Cardiac septum (tissue), 1 donor: ENCODE measurements at regions of chr5 and their contacts with region 1.

Region 1: DNA sequence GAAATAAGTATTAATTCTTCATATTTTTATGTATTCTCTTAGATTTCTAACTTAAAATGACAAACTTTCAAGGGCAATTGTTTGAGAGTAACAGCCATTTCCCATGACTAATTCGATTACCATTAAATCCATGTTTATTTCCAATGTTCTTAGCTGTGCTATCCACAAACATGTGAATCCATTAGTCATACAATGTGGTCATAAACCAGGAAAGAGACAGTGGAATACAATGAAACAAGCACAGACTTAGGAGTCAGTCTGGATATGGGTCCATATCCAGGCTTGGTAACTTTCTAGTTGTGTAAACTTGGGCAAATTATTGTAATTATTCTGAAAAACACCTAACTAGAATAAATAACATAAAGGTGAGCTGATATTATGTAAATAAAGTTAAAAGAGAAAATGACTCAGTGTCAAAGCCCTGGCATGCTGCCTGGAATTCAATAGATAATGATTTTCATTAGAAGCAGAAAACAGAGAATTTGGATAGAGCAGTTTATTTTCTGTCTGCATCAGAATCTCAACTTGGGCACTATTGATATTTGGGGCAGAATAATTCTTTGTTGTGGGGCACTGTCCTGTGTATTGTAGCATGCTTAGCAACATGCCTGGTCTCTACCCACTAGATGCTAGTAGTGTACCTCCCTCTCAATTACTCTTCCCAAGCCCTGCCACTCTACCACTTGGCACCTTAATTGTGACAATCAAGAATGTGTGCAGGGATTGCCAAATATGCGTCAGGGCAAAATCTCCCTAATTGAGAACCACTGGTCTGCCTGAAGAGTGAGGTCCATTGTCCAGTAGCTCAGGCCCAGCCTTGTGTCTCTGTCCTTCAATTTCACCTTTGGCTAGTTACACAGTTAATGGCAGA is 44.7 kb upstream of the SLC27A6 start:
- DNase-seq: no peak

Region 2: GRCh38 chr5:128808656-128809055 is 111.9 kb before region 1 on chr5:
- intact Hi-C with region 1: no loop called
- DNase-seq: no peak

Region 3: DNA sequence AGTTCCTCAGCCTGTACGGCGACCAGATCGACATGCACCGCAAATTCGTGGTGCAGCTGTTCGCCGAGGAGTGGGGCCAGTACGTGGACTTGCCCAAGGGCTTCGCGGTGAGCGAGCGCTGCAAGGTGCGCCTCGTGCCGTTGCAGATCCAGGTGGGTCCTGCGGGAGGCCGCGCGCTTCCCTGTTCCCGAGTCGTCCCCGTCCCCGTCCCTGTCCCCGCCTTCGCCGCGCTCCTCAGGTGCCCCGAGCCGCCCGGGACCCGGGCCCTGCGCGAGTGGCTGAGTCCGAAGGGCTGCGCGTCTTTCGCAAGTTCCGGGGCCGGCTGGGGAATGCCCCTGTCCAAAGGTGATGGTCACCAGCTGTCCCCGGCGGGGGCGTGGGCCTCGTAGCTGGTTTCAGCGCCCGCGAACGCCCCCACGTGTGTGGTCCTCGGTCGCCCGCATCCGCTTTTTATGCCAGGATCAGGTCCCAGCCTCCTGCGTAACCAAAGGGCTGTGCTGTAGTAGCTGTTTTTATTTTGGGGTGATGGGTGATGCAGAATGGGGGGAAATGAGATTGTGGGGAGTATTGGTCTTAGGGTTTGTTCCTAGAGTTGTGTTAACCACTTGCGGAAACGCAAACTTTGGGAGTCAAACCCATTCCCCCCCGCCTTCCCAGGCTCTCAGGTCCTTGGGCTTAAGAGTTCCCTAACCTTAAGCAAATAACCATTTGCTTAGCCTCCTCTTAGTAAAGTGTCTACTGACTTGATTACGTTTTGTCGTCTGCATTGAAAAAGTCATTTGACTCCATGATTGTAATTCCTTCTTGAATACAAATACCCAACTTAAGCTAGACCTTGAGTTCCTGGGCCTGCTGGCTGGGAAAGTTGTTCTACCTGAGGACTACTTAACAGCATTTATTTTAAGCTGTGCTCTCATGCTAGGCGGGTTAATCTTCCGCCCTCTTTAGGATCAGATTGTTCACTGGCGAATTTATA is 174.6 kb after region 1 on chr5:
- intact Hi-C with region 1: loop called (anchors 5 kb)
- DNase-seq: peak; percentile 81